ENCODE measurements at regions of chr3 and their contacts with region 1.

Region 1: DNA sequence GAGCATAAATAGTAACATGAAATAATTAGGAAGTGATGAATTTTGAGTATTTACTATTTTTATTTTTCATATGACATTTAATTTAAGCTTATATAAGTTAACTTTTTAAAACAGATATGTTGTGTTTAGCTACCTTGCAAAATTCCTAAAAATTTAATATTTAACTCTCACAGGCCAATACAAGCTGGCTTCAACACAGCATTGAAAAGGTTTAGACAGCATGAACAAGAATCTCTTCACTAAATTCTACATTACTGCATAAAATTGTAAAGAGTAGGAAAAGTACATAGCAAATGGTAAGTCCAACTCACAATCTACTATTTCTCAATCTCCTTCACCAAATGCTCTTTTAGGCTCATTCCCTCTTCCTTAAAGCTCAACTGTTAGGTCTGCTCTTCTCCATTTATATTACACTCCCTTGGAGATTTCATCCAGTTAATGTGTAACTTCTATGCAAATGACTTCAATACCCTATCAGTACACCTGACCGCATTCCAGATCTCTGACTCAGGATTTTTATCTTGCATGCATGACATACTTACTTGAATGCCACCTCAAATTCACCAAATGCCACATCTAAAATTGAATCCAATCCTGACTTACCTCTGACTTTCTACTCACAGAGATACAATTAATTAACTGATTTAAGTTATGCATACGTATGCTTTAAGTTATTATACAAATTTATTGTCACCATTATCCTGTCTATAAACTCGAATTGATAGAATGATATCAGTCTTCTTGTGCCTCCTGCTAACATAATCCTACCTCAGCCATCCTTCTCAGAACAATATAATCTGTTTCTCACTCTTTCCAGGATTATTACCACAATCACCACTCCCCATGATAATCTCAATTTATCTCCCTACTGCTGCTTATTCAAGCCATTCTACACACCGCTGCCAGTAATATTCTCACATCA is 127.0 kb downstream of the STAG1 start:
- DNase-seq: peak; percentile 90
- ATAC-seq: peak; percentile 98
- H3K4me3 ChIP-seq: no peak overlapping the region
- H3K27ac ChIP-seq: peak overlapping the region; percentile 49
- H3K4me1 ChIP-seq: peaks cover 19% of the 10 kb centered on the region
- H3K27me3 ChIP-seq: no peaks in the 10 kb centered on the region
- CTCF ChIP-seq: no peak
- EP300 ChIP-seq: no peak
- POLR2A ChIP-seq: no peak
- RAD21 ChIP-seq: no peak

Region 2: GRCh38 chr3:136734382-136735070 is 109.4 kb after region 1 on chr3:
- CTCF ChIA-PET with region 1: no interaction called
- POLR2A ChIA-PET with region 1: no interaction called
- in situ Hi-C with region 1: no loop called
- intact Hi-C with region 1: loop called (anchors 5 kb)
- DNase-seq: peak; percentile 59
- ATAC-seq: peak; percentile 69
- H3K4me3 ChIP-seq: no peak overlapping the region; a peak in 1 of 6 replicates
- H3K27ac ChIP-seq: peak overlapping the region; percentile 42
- H3K4me1 ChIP-seq: peaks cover 60% of the 10 kb centered on the region
- H3K27me3 ChIP-seq: no peaks in the 10 kb centered on the region
- CTCF ChIP-seq: peak; percentile 37
- EP300 ChIP-seq: no peak
- POLR2A ChIP-seq: no peak
- RAD21 ChIP-seq: no peak

Measured in HepG2 (cell line).